AG04450 (cell line): ENCODE measurements at regions of chr3 and their contacts with region 1.

Region 1: DNA sequence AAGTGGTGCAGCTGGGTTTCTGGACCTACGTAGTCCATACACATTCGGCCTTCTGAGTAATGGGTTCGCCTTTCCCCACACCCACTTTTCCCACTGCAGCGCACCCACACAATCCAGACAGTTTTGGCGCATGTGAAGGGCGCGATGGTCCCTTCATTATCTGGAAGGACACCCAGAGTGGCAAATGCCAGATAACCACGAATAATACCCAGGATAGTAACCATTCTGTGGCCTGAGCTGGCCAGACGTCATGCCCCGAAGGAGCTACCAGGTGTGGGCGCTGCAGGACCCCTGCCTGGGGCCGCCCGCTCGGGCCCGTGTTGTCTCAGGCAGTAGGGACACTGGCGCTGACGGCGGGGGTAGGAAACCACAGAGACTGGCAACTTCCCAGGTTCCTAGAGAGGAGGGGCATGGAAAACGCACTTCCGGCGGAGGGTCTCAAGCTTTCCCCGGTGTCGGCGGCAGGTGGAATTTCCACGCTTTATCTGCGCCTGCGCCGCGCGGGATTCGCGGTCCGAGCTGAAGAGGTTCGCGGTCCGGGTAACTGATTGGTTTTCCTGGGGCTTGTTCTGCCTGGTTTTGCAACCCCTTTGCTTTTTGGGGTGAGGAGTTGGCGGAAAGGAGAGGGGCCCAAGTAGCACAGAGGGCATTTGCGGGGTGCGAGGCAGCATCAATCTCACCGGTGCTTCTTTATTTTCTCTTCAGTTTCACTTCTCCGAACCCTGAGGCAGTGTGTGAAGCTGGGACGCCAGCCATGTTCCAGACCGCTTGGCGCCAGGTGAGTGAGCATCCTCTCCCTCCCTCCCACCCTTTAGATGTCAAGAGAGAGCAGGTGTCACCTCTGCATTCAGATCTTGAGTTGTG is at the start of gene ZNF620:
- DNase-seq: no peak
- H3K4me3 ChIP-seq: peak within 1 kb of the TSS; percentile 71
- H3K27ac ChIP-seq: peak within 1 kb of the TSS; percentile 80
- H3K27me3 ChIP-seq: no peaks in the 10 kb centered on the region
- CTCF ChIP-seq: peak; percentile 36
- polyA plus RNA-seq, gene ZNF620: 0.69 and 0.77 TPM in 2 replicates

Region 2: GRCh38 chr3:40258555-40258954 is 247.3 kb before region 1 on chr3:
- CTCF ChIA-PET with region 1: no interaction called
- POLR2A ChIA-PET with region 1: no interaction called
- DNase-seq: no peak
- H3K4me3 ChIP-seq: no peak overlapping the region
- H3K27ac ChIP-seq: no peak overlapping the region
- H3K27me3 ChIP-seq: no peaks in the 10 kb centered on the region
- CTCF ChIP-seq: no peak

Region 3: GRCh38 chr3:40379674-40380306 is 126.0 kb before region 1 on chr3:
- CTCF ChIA-PET with region 1: no interaction called
- POLR2A ChIA-PET with region 1: interaction called, 13 read pairs
- DNase-seq: no peak
- H3K4me3 ChIP-seq: no peak overlapping the region
- H3K27ac ChIP-seq: no peak overlapping the region
- H3K27me3 ChIP-seq: no peaks in the 10 kb centered on the region
- CTCF ChIP-seq: no peak

Region 4: DNA sequence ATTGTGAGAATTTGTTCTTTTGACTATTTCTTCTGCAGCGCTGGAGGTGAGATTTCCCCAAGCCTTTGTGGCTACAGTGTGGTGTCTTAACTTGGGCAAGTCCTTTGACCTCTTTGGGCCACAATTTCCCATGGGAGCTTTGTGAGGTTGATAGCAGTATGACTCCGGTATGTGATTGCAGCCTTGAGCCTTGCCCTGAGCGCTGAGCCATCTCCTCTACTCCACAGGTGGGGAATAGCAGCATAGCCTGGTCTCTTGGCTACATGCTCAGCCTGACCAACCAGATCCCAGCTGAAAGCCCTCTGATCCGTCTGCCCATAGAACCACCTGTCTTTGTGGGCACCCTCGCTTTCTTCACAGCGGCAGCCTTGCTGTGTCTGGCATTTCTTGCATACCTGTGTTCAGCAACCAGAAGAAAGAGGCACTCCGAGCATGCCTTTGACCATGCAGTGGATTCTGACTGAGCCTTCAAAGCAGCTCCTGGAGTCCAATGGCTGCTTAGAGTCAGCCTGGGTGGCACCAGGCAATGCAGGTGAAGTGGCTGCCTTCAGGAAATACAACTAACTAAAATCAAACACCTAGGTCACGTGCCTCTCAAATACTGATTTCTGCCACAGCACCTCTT is 78.7 kb before region 1 on chr3:
- CTCF ChIA-PET with region 1: no interaction called
- POLR2A ChIA-PET with region 1: no interaction called
- DNase-seq: no peak
- H3K4me3 ChIP-seq: no peak overlapping the region
- H3K27ac ChIP-seq: no peak overlapping the region
- H3K27me3 ChIP-seq: peaks cover 1% of the 10 kb centered on the region
- CTCF ChIP-seq: no peak

Region 5: DNA sequence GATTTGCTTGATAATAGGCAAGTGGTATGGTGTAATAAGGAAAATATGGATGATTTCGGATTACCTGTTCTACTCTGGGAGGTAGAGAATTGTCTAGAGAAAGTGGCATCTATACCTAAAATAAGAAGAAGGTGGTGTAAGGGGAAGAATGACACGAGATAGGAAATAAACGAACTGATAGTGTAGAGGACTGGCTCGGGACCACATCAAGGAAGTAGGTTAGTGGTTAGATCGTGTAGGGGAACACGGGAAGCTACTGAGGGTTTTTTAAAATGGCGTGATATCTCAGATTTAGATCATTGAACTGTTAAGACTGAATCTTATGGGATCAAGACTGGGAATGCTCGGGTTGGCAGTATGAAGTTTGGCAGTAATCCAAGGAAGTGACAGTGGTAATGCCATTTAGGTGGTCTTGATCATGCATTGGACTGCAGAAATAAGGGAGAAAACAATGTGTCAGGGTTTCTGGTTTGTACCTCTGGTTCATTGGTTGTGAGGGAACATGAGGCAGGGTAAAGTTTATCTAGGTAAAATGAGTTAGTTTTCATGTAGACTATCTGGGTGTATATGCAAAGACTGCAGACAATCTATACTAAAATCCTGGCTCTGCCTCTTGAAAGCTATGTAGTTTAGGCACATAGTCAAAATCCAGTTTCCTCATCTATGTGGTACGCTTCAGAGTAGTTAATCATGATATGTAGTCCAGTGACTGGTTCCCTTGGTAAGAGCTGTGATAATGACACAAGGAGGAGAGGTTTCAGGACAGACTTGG is 41.3 kb before region 1 on chr3:
- CTCF ChIA-PET with region 1: no interaction called
- POLR2A ChIA-PET with region 1: no interaction called
- DNase-seq: no peak
- H3K4me3 ChIP-seq: no peak overlapping the region
- H3K27ac ChIP-seq: no peak overlapping the region
- H3K27me3 ChIP-seq: no peaks in the 10 kb centered on the region
- CTCF ChIP-seq: no peak